BJ (cell line): ENCODE measurements at regions of chr12 and their contacts with region 1.

Region 1: DNA sequence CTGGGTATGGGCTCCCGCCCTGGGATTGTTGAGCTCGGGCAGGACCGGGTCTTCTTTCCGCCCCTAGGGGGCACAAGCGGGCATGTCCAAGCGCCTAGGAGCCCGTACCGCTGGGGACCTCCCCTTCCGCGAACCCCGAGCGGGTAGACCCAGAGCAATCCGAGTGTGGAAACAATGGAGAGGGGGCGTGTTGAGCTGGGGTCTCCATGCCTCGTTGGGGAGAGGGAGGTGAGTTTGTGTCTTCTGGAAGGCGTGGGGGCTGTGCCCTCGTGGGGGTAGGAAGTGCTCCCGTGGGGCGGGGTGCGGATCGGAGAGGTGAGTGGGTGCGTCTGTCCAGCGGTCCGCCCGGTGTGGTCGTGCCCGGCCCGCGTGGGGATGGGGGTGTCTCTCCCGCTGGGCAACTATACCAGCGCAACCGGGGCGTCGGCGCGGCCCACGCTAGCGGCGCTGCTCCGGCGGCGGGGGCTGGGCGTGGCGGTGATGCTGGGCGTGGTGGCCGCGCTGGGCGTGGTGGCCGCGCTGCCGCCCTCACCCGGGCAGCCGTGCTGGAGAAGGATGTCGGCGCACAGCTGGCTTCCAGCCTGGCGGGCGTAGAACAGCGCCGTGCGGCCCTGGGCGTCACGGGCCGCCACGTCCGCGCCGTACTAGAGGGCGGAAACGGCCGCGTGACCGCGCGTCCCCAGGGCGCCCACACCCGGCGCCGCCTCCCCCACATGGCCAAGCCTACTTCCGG is 12.2 kb downstream of the AGAP2 start:
- DNase-seq: peak; percentile 19
- H3K4me3 ChIP-seq: peak overlapping the region; percentile 93
- H3K27me3 ChIP-seq: 0 out of 2 replicates have a peak, but pooled peaks cover 1% of the 10 kb centered on the region
- CTCF ChIP-seq: peak; percentile 98

Region 2: DNA sequence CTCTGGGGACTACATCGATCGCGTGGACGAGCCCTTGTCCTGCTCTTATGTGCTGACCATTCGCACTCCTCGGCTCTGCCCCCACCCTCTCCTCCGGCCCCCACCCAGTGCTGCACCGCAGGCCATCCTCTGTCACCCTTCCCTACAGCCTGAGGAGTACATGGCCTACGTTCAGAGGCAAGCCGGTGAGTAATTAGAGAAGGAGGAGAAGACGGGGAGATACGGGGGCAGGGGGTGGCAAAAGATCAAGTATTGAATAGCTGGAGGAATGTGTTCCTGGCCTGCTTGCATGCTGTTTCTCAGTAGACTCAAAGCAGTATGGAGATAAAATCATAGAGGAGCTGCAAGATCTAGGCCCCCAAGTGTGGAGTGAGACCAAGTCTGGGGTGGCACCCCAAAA is 10.5 kb before region 1 on chr12:
- CTCF ChIA-PET with region 1: interaction called, 17 read pairs
- POLR2A ChIA-PET with region 1: no interaction called
- DNase-seq: no peak
- H3K4me3 ChIP-seq: no peak overlapping the region
- H3K27me3 ChIP-seq: no peaks in the 10 kb centered on the region
- CTCF ChIP-seq: no peak

Region 3: GRCh38 chr12:57744777-57745484 is 18.6 kb after region 1 on chr12 and contains the start of gene TSPAN31:
- CTCF ChIA-PET with region 1: interaction called, 14 read pairs
- POLR2A ChIA-PET with region 1: no interaction called
- DNase-seq: peak; percentile 90
- H3K4me3 ChIP-seq: peak within 1 kb of the TSS; percentile 75
- H3K27me3 ChIP-seq: peaks cover 18% of the 10 kb centered on the region
- CTCF ChIP-seq: no peak
- polyA plus RNA-seq, gene TSPAN31: 25.7 and 40.4 TPM in 2 replicates